Activated T-helper 1 cell treated with anti-CD3 and anti-CD28 coated beads, Interleukin-12 subunit alpha, Interleukin-12 subunit beta, Interleukin-2, Interleukin-4 antibody, amounts not matched to agents 30 ng/mL and 10 ng/mL and 1 ng/mL, durations not matched to agents 14 hours and 24 hours and 36 hours (primary cell): ENCODE measurements at regions of chr1 and their contacts with region 1.

Region 1: DNA sequence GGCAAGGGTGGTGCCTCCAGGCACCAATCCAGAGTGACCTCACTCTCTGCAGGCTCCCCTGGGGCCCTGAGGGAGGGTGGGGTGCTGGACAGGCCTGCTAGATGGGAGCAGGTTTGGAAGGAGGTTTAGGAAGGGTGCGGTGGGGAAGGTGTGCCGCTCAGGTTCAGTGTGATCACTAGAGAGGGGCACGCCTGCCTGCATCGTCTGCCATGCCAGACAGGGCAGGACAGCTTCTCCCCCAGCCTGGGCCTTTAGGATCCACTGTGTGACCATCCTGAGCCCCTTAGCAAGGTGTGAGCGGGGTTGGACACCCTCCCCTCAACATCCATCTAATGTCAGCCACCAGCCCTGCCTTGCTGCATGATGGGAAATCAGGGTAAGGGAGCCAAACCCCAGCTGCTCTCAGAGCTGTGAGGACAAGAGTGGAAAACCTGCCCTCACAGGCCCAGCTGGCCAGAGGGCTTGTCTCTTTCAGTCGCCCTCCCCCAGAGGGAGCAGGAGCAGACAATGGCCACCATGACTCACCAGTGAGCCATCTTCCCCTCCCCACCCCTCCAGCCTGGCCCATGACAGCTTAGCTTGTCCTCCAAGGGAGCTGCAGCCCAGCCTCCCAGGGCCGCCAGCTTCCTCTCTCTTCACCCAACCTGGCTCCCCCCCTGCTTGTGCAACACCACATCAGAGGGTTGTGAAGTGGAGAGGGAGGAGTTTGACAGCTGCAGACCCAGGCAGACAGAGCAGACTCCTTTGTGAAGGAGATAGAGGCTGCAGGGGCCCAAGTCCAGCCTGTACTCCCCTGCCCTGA is 37.0 kb downstream of the NUAK2 start:
- DNase-seq: peak; percentile 84
- H3K4me3 Mint-ChIP-seq: peak overlapping the region; percentile 64
- H3K27ac Mint-ChIP-seq: peak overlapping the region; percentile 90
- H3K4me1 Mint-ChIP-seq: peaks cover 75% of the 10 kb centered on the region
- H3K27me3 Mint-ChIP-seq: peaks cover 9% of the 10 kb centered on the region

Region 2: DNA sequence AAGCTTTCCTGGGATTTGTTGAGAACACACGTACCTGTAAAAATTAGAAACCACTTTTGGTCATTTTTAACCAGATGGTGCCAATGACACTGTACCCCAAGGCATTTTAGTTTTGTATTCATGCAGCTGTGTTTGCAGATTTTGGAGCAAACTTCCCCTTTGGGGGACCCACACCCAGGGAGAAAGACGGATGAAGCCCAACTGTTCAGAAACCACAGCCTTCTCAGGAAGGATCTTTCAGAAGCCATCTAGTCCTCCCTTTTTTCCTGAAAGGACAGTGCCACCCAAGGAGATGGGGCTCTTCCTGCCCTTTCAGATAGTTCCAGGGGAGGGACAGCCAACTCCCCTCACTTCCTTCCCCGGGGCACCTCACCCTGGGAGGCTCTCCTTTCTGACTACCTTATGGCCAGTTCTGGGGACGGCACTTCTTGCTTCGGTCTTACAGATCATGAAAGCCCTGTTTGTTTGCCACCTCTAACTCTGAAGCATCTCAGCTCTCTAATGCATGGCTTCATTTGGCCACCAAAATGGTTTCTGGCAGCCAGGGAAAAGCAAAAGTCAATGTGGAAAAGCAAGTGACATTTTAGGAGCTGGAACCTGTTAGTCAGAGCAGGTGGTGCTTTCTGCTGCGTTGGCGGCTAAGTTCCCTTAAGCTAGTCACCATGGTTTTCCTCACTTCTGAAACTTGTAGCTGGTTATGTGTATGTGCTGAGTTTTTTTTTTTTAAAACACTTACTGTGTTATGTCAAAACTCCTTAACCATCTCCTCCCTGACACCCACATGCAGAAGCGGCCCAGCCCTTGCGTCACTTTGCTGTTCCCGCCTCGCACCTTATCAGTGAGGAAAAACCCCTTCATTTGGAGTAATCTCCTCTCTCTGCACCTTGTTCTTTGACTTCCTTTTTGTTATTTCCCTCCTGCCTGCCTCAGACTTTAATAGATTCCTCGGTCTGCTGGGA is 46.7 kb before region 1 on chr1:
- intact Hi-C with region 1: no loop called
- DNase-seq: no peak
- H3K4me3 Mint-ChIP-seq: peak overlapping the region; percentile 63
- H3K27ac Mint-ChIP-seq: peak overlapping the region; percentile 94
- H3K4me1 Mint-ChIP-seq: peaks cover 75% of the 10 kb centered on the region
- H3K27me3 Mint-ChIP-seq: no peaks in the 10 kb centered on the region

Region 3: DNA sequence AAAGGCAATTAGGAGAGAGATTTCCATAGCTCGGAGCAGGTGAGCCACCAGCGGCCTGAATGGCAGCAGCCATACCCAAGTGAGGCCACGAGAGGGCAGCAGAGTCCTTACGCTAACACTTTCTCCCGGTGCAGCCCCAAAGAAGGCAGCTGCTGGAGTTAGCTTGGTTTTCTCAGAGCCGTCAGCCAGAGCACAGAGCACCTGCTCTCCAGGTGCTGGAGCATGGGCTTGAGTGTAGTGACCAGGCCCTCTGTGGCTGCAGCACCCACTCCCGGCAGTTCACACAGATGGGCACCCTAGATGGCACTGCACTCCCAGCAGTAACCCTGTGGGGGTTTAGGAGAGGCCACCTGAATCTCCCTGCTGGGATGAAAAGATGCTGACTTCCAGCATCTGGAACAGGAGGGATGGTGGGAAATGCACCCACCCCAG is 11.0 kb before region 1 on chr1:
- intact Hi-C with region 1: loop called (anchors 1 kb)
- DNase-seq: peak; percentile 74
- H3K4me3 Mint-ChIP-seq: no peak overlapping the region
- H3K27ac Mint-ChIP-seq: no peak overlapping the region
- H3K4me1 Mint-ChIP-seq: peaks cover 32% of the 10 kb centered on the region
- H3K27me3 Mint-ChIP-seq: no peaks in the 10 kb centered on the region

Region 4: GRCh38 chr1:205313563-205314308 is 29.2 kb after region 1 on chr1:
- intact Hi-C with region 1: loop called (anchors 1 kb)
- DNase-seq: peak; percentile 21
- H3K4me3 Mint-ChIP-seq: peak overlapping the region; percentile 83
- H3K27ac Mint-ChIP-seq: peak overlapping the region; percentile 94
- H3K4me1 Mint-ChIP-seq: peaks cover 84% of the 10 kb centered on the region
- H3K27me3 Mint-ChIP-seq: no peaks in the 10 kb centered on the region

Region 5: DNA sequence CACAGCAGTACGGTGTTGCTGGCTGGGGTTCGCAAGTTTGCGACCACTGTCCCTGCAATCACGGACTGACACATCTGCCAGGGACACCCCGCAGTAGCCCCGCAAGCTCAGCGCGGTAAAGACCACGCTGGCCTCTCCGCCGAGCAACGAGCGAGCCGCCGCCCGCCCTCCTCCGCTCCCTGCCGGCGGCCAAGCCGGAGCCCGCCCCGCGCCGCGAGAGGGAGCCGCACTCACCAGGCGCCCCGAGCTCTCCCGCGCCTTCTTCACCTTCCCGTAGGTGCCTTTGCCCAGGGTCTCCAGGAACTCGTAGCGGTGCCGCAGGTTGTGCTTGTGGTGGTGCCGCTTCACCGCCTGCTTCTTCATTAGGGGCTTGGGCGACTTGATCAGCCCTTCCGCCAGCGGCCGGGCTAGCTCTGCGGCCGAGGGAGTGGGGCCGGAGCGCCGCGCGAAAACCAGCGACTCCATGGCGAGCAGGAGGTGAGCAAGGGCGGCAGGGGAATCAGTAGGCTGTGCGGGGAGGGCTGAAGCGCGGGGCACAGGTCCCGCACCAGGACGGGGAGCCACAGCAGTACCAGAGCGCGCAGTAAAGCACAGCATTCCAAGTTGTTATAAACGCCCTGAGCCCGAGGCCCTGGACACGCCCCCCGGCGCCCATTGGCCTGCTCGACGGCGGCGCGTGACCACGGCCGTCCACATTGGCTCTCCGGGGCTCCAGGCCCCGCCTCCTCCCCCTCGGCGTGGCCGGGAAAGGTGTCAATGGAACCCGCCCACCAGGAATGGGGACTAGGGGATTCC is 36.8 kb after region 1 on chr1 and contains the start of gene NUAK2:
- intact Hi-C with region 1: loop called (anchors 1 kb)
- DNase-seq: peak; percentile 78
- H3K4me3 Mint-ChIP-seq: peak within 1 kb of the TSS; percentile 95
- H3K27ac Mint-ChIP-seq: peak within 1 kb of the TSS; percentile 80
- H3K4me1 Mint-ChIP-seq: peaks cover 68% of the 10 kb centered on the region
- H3K27me3 Mint-ChIP-seq: peaks cover 8% of the 10 kb centered on the region
- total RNA-seq, gene NUAK2: 1.1 and 1.3 TPM in 2 replicates

Region 6: DNA sequence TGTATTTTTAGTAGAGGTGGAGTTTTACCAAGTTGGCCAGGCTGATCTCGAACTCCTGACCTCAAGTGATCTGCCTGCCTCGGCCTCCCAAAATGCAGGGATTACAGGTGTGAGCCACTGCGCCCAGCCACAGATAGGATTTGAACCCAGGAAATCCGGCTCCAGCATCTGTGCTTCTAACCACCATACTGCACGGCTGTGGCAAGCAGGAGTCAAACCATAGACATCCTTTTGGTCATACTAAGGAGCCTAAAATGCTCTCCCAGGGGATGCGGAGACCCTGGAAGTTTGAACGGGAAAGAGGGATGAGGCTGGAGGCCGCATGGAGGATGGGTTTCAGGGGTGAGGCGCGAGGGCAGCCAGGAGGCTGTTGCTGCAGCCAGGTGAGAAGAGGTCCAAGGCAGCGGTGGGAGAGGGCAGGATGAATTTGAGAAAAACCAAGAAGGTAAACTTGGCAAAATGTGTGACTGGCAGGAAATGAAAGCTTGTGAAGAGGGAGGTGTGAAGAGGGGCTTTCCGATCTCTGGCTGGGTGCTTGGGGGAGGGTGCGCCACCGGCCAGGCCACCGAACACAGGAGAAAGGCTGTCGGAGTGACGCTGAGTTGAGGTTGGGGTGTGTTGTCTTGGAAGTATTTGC is 195.9 kb after region 1 on chr1:
- intact Hi-C with region 1: loop called (anchors 5 kb)
- DNase-seq: peak; percentile 54
- H3K4me3 Mint-ChIP-seq: peak overlapping the region; percentile 2
- H3K27ac Mint-ChIP-seq: peak overlapping the region; percentile 71
- H3K4me1 Mint-ChIP-seq: peaks cover 32% of the 10 kb centered on the region
- H3K27me3 Mint-ChIP-seq: peaks cover 31% of the 10 kb centered on the region

Region 7: DNA sequence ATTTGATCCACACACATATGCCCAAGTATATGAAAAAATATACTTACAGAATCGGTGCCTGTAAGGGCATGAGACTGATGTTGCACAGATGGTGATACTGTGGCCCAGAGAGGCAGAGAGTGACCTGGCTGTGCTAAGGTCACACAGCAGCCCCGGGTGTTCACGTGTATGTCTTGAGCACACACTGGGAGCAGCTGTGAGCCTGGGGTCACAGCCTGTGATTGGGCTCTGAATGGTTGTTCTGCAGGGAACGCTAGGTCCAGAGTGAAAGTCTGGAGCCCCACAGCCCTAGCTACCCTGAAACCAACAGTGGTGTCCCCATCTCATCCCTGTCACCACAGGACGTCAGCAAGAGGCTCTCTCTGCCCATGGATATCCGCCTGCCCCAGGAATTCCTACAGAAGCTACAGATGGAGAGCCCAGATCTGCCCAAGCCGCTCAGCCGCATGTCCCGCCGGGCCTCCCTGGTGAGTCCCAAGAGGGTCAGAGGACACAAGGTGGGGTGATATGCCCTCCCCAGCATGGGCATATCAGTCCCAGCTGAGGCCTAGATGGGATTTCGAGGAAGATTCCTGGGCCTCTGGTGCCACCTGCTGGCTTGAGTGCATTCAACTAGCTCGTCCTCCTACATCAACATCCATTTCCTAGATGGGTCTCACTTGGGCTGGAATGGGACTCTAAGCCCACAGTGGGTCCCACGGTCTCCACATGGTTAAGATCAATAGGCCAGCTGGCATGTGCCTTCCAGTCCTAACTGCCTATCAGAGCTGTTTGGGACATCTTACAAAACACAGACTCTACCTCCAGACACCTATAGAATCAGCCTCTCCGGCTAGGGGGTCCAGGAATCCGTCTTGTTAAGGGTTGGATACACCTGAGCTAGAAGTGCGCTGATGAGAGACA is 239.6 kb after region 1 on chr1:
- intact Hi-C with region 1: no loop called
- DNase-seq: peak; percentile 45
- H3K4me3 Mint-ChIP-seq: no peak overlapping the region
- H3K27ac Mint-ChIP-seq: no peak overlapping the region
- H3K4me1 Mint-ChIP-seq: no peaks in the 10 kb centered on the region
- H3K27me3 Mint-ChIP-seq: peaks cover 3% of the 10 kb centered on the region